ENCODE measurements at regions of chr3 and their contacts with region 1.

Region 1: DNA sequence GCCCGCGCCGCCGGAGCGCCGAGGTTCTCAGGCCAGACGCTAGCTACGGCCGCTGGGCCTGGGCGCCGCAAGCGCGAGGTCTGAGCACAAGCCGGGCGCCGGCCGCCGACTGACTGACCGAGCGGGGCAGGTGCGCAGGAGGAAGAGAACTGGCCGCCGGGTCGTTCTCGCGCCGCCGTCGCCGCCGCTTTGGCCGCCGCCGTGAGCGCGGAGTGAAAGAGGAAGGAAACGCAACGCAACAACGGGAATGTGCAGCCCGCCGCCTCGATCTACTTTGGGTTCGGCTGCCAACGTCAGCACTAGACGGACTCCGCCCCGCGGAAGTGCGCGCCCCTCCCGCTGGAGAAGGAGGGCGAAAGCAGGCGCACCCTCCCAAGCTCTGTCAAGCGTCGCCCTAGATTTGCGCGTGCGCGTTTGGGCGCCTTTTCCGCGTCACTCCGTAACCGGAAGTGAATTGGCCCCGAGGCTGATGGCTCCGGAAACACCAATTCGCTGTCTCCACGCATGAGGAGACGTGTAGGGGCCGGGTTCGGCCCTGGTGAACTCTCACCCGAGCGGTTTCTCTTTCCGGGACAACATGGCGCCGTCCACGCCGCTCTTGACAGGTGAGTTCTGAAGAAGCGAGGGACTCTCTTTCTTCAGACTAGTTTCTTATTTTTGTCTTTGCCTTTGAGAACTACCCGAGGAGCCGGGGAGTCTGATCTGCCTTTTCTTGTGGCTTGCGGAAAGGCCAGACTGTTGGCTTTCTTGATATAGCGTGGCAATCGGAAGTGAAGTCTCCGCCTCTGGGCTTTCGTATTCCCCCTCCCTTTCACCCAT is at the starts of genes EIF2A and SERP1:
- DNase-seq: peak; percentile 100
- H3K4me3 Mint-ChIP-seq: peak within 1 kb of the TSS; percentile 90
- H3K27ac Mint-ChIP-seq: peak within 1 kb of the TSS; percentile 95
- H3K4me1 Mint-ChIP-seq: peaks cover 51% of the 10 kb centered on the region
- H3K27me3 Mint-ChIP-seq: no peaks in the 10 kb centered on the region
- total RNA-seq, gene EIF2A: 125 and 133 TPM in 2 replicates
- total RNA-seq, gene SERP1: 88.8 and 103 TPM in 2 replicates

Region 2: DNA sequence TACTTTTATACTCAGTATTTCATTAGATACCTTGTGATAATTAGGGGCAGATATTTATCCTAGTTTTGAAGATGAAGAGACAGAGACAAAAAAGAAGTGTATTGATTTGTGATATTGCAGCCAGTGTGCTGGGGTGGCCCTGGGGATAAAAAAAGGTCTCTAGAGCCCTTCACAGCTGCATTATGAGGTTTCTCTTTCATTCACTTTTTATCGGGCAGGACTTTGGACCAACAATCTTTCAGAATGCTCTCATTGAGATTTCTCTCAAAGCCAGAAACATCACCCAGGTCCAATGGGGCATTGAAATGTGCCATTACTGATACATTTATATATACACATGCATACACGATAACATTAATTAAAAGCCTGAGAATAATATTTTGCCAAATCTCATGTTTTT is 36.2 kb after region 1 on chr3:
- intact Hi-C with region 1: loop called (anchors 2 kb)
- DNase-seq: no peak
- H3K4me3 Mint-ChIP-seq: no peak overlapping the region
- H3K27ac Mint-ChIP-seq: peak overlapping the region; percentile 78
- H3K4me1 Mint-ChIP-seq: peaks cover 18% of the 10 kb centered on the region
- H3K27me3 Mint-ChIP-seq: no peaks in the 10 kb centered on the region

Region 3: GRCh38 chr3:150703299-150704134 is 157.1 kb after region 1 on chr3 and contains the start of gene ERICH6:
- intact Hi-C with region 1: loop called (anchors 1 kb)
- DNase-seq: peak; percentile 95
- H3K4me3 Mint-ChIP-seq: peak within 1 kb of the TSS; percentile 92
- H3K27ac Mint-ChIP-seq: peak within 1 kb of the TSS; percentile 99
- H3K4me1 Mint-ChIP-seq: peaks cover 28% of the 10 kb centered on the region
- H3K27me3 Mint-ChIP-seq: peaks cover 10% of the 10 kb centered on the region
- total RNA-seq, gene ERICH6: not detected in 2 replicates